ENCODE measurements at regions of chr13 and their contacts with region 1.

Region 1: GRCh38 chr13:94549232-94550061 is 46.5 kb downstream of the TGDS start:
- DNase-seq: peak; percentile 84 to 97 (median 92)

Region 2: GRCh38 chr13:94601446-94602431 is 52.3 kb after region 1 on chr13 and contains the start of gene GPR180:
- intact Hi-C with region 1: loop called (anchors 2 kb)
- DNase-seq: peak; percentile 87 to 99 (median 97)

Region 3: GRCh38 chr13:95083758-95084157 is 534.3 kb after region 1 on chr13:
- intact Hi-C with region 1: no loop called
- DNase-seq: no peak